Activated CD4-positive, alpha-beta memory T cell treated with anti-CD3 and anti-CD28 coated beads for 36 hours (primary cell): ENCODE measurements at regions of chr3 and their contacts with region 1.

Region 1: GRCh38 chr3:149702691-149703441 is 45.0 kb upstream of the WWTR1 start:
- DNase-seq: peak; percentile 28
- H3K4me3 Mint-ChIP-seq: peak overlapping the region; percentile 16
- H3K27ac Mint-ChIP-seq: peak overlapping the region; percentile 81
- H3K4me1 Mint-ChIP-seq: peaks cover 33% of the 10 kb centered on the region
- H3K27me3 Mint-ChIP-seq: no peaks in the 10 kb centered on the region

Region 2: DNA sequence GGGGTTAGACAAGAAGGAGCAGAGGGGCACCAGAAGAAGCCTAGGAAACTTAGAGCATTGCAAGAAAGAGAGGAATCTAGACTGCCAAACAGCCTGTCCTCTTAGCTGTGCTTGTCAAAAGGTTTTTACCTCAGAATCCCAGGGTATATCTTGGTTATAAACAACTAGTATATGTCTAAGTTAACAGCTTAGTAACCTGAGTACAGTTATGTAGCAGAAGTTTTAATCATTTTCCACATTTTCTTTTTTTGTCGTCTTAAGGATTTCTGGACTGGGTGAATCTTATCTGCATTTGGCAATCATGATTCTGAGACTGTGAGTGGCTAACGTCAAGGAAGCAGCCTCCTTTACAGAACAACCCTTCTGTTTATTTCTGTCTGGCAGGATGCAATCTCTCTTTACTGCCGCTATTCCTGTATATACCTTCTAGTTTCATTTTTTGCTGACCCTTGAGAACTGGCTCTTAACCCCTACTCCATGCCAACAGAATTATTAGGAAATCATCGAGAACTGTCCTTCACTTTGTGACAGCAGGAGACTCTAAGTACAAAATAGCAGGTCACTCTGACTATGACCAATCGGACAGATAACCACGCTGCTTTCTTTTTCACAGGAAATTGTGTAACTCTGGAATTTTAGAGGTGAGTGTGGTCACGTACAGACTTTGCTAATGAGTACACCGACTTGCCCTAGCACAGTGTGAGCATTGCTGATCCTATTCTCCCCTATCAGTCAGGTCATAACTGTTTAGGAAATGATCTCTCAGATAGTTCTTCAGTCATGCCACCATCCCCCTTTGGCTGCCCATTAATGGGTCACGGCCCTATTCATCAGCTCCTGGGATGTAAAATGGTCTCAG is 477.9 kb before region 1 on chr3:
- CTCF ChIA-PET with region 1: no interaction called
- POLR2A ChIA-PET with region 1: no interaction called
- intact Hi-C with region 1: loop called (anchors 10 kb)
- DNase-seq: peak; percentile 46
- H3K4me3 Mint-ChIP-seq: peak overlapping the region; percentile 64
- H3K27ac Mint-ChIP-seq: peak overlapping the region; percentile 48
- H3K4me1 Mint-ChIP-seq: peaks cover 21% of the 10 kb centered on the region
- H3K27me3 Mint-ChIP-seq: peaks cover 3% of the 10 kb centered on the region

Region 3: DNA sequence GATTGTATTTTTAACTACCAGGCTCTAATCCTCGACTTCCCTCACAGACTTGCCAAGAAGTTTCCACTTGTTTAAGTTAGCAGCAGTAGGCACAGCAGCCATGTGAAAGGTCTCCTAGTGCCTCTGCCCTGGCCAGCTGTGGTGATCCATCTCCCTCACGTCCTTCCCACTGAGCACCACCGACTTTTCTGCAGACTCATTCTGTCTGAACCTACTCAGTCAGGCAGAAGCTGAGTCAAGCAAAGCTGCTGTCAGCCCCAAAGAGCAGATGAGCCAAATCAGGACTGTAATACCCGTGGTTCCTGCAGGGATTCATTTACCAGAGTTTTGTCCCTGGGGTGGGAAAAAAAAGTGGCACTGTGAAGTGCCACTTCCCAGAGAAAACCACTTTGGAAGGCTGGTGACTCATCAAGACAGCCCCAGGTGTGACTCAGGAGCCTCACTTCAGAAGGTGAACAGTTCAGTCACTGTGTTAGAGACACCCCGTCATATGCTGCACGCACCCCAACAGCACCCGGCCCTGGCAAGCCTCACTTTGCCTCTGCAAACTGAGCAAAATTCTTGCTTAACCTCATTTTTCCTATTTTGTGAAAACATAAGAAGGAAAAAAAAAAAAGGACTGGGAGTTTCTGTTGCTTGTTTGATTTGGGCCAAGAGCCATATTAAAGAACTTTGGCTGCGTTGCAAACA is 121.0 kb before region 1 on chr3:
- CTCF ChIA-PET with region 1: no interaction called
- POLR2A ChIA-PET with region 1: no interaction called
- intact Hi-C with region 1: loop called (anchors 1 kb)
- DNase-seq: peak; percentile 29
- H3K4me3 Mint-ChIP-seq: no peak overlapping the region
- H3K27ac Mint-ChIP-seq: no peak overlapping the region
- H3K4me1 Mint-ChIP-seq: peaks cover 16% of the 10 kb centered on the region
- H3K27me3 Mint-ChIP-seq: peaks cover 20% of the 10 kb centered on the region

Region 4: GRCh38 chr3:149657926-149658733 is 44.7 kb before region 1 on chr3 and contains the start of gene WWTR1:
- CTCF ChIA-PET with region 1: no interaction called
- POLR2A ChIA-PET with region 1: no interaction called
- intact Hi-C with region 1: loop called (anchors 1 kb)
- DNase-seq: peak; percentile 65
- H3K4me3 Mint-ChIP-seq: peak within 1 kb of the TSS; percentile 82
- H3K27ac Mint-ChIP-seq: no peak within 1 kb of the TSS
- H3K4me1 Mint-ChIP-seq: peaks cover 9% of the 10 kb centered on the region
- H3K27me3 Mint-ChIP-seq: peaks cover 51% of the 10 kb centered on the region
- total RNA-seq, gene WWTR1: 1.0 to 1.2 TPM

Region 5: DNA sequence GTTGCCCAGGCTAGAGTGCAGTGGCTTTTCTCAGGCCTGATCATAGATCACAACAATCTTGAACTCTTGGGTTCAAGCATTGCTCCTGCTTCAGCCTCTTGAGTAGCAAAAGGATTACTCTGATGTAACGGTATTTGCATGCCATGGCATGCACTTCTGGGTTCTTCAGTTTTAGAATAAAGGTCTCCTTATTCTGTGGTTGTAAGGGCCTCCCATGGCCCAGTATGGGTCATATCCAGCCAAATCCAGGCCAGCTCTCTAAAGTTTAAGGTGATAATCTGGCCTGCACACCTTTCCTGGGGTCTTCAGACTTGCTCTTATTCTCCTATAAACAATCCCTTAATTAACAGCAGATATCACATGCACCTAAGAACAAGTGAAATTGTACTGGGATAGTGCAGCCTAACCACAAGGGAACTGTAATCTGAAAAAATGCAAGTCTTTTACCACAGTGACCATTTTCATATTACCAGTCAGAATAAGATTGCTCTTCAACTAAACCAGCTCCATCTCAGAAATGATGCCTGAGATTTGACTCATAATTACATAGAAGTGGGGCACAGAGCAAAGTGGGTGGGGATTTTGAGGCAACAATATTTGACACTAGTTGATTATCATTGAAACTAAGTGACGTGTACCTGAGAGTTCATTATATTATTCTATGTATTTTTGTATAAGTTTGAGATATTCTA is 24.0 kb after region 1 on chr3:
- CTCF ChIA-PET with region 1: no interaction called
- POLR2A ChIA-PET with region 1: interaction called, 3 read pairs
- intact Hi-C with region 1: loop called (anchors 1 kb)
- DNase-seq: peak; percentile 40
- H3K4me3 Mint-ChIP-seq: no peak overlapping the region
- H3K27ac Mint-ChIP-seq: no peak overlapping the region
- H3K4me1 Mint-ChIP-seq: peaks cover 8% of the 10 kb centered on the region
- H3K27me3 Mint-ChIP-seq: peaks cover 3% of the 10 kb centered on the region

Region 6: DNA sequence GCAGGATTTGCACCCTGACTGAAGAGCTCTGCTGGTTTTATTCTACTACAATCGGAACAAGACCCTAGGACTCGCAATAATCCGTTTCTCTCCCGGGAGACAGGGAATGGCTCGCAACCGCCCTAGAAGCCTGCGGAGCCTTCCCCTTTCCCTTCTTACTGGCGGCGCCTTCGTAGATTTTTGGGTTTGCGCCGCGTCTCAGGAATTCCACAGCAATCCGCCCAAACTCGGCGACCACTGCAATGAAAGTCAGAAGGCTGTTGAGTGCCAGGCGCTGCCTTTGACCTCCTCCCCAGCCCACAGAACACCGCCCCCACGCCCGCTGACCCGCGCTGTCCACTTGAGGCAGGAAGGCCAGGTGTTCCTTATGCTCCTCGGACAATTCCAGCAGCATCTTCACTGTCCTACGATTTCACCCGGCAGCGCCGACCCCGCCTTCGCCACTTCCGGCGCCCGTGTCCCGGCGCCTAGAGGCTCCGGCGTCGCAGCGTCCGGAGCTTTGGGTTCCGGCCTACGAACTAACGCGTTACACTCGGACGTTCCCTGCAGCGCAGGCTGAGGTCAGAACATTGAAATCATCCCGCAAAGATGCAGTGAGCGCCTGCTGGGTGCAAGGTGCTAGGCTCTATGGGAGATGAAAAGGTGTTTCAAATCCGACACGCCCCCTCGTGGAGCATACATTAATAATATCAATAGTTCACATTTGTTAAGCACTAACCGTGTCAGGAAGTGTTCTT is 49.4 kb after region 1 on chr3 and contains the start of gene COMMD2:
- CTCF ChIA-PET with region 1: interaction called, 4 read pairs
- POLR2A ChIA-PET with region 1: no interaction called
- intact Hi-C with region 1: loop called (anchors 1 kb)
- DNase-seq: peak; percentile 89
- H3K4me3 Mint-ChIP-seq: peak within 1 kb of the TSS; percentile 90
- H3K27ac Mint-ChIP-seq: peak within 1 kb of the TSS; percentile 87
- H3K4me1 Mint-ChIP-seq: peaks cover 22% of the 10 kb centered on the region
- H3K27me3 Mint-ChIP-seq: no peaks in the 10 kb centered on the region
- total RNA-seq, gene COMMD2: 28.4 to 34.4 TPM